ENCODE measurements at regions of chr4 and their contacts with region 1.

Region 1: GRCh38 chr4:113645771-113646441 is 115.6 kb downstream of the CAMK2D start:
- DNase-seq: no peak
- ATAC-seq: no peak
- H3K4me3 ChIP-seq: no peak overlapping the region
- H3K27ac ChIP-seq: no peak overlapping the region
- H3K4me1 ChIP-seq: peaks cover 7% of the 10 kb centered on the region
- H3K27me3 ChIP-seq: no peaks in the 10 kb centered on the region
- CTCF ChIP-seq: no peak
- EP300 ChIP-seq: no peak
- POLR2A ChIP-seq: no peak
- RAD21 ChIP-seq: no peak

Region 2: GRCh38 chr4:113657586-113658233 is 11.8 kb after region 1 on chr4:
- CTCF ChIA-PET with region 1: interaction called, 7 read pairs
- POLR2A ChIA-PET with region 1: interaction called, 14 read pairs
- RAD21 ChIA-PET with region 1: interaction called, 43 read pairs
- SMC1A ChIA-PET with region 1: interaction called, 282 read pairs
- in situ Hi-C with region 1: no loop called
- intact Hi-C with region 1: no loop called
- DNase-seq: no peak
- ATAC-seq: no peak; the same call in 2 of the 3 replicates
- H3K4me3 ChIP-seq: no peak overlapping the region
- H3K27ac ChIP-seq: no peak overlapping the region
- H3K4me1 ChIP-seq: no peaks in the 10 kb centered on the region
- H3K27me3 ChIP-seq: no peaks in the 10 kb centered on the region
- CTCF ChIP-seq: no peak
- EP300 ChIP-seq: no peak
- POLR2A ChIP-seq: no peak
- RAD21 ChIP-seq: no peak

Region 3: DNA sequence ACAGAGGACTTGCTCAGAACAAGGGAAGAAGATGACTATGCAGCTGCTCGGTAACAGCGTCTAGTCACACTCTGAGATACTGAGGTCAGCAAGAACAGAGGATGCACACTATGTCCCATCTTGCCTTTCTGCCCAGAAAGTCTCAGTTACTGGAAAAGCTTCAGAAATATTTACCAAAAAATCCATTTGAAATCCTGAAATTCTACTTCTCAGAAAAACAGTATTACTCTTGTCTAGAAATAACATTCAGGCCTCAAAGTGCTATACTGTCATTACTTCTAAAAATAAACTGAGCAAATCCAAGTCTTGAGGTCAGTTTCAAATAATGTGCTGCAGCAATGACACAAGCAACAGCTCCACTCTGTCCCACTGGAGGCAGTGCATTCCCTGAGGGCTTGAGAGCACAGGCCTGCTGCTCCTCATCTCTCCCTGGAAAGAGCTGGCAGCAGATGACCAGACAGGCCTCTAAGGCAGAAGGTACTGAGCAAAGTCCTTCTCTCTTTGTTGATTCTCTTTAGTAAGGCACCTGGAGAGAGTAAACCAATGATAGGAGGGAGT is 38.7 kb after region 1 on chr4:
- CTCF ChIA-PET with region 1: no interaction called
- POLR2A ChIA-PET with region 1: interaction called, 3 read pairs
- RAD21 ChIA-PET with region 1: interaction called, 4 read pairs
- SMC1A ChIA-PET with region 1: interaction called, 282 read pairs
- in situ Hi-C with region 1: no loop called
- intact Hi-C with region 1: loop called (anchors 2 kb)
- DNase-seq: no peak
- ATAC-seq: peak; percentile 10; the same call in 2 of the 3 replicates
- H3K4me3 ChIP-seq: no peak overlapping the region
- H3K27ac ChIP-seq: no peak overlapping the region
- H3K4me1 ChIP-seq: peaks cover 32% of the 10 kb centered on the region
- H3K27me3 ChIP-seq: no peaks in the 10 kb centered on the region
- CTCF ChIP-seq: 0 out of 6 replicates have a peak, but pooled peaks of 1 of the 3 experiments have one; percentile 0
- EP300 ChIP-seq: no peak
- POLR2A ChIP-seq: no peak
- RAD21 ChIP-seq: 0 out of 2 replicates have a peak, but pooled peaks have one; percentile 4

Measured in GM12878 (cell line).